Activated T-helper 1 cell treated with anti-CD3 and anti-CD28 coated beads, Interleukin-12 subunit alpha, Interleukin-12 subunit beta, Interleukin-2, Interleukin-4 antibody, amounts not matched to agents 30 ng/mL and 10 ng/mL and 1 ng/mL, durations not matched to agents 14 hours and 24 hours and 36 hours (primary cell): ENCODE measurements at regions of chr10 and their contacts with region 1.

Region 1: DNA sequence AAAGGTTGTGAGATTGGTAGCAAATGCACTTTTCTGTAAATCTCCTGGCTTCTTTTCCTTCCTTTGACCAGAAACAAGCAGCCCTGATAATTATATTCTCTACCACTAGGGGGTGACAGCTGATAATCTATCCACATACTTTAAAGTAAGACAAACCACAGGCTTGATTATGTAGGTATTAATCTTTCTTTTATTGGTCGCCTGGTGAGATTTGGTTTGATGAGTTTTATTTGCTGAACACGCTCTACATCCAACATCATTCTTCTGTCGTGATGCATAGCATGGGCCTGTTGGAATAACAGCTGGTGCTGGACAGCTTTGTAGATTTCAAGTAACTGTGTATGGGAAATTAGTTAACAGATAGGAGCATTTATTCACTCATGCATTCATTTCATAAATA is 63.5 kb downstream of the ZNF365 start:
- DNase-seq: no peak
- H3K4me3 Mint-ChIP-seq: no peak overlapping the region
- H3K27ac Mint-ChIP-seq: no peak overlapping the region
- H3K4me1 Mint-ChIP-seq: peaks cover 12% of the 10 kb centered on the region
- H3K27me3 Mint-ChIP-seq: peaks cover 15% of the 10 kb centered on the region

Region 2: GRCh38 chr10:61896854-61897661 is 540.6 kb before region 1 on chr10:
- intact Hi-C with region 1: loop called (anchors 5 kb)
- DNase-seq: peak; percentile 56
- H3K4me3 Mint-ChIP-seq: peak overlapping the region; percentile 87
- H3K27ac Mint-ChIP-seq: peak overlapping the region; percentile 90
- H3K4me1 Mint-ChIP-seq: peaks cover 38% of the 10 kb centered on the region
- H3K27me3 Mint-ChIP-seq: peaks cover 3% of the 10 kb centered on the region

Region 3: GRCh38 chr10:62082729-62083411 is 354.8 kb before region 1 on chr10:
- intact Hi-C with region 1: no loop called
- DNase-seq: peak; percentile 26
- H3K4me3 Mint-ChIP-seq: peak overlapping the region; percentile 78
- H3K27ac Mint-ChIP-seq: peak overlapping the region; percentile 84
- H3K4me1 Mint-ChIP-seq: peaks cover 72% of the 10 kb centered on the region
- H3K27me3 Mint-ChIP-seq: no peaks in the 10 kb centered on the region

Region 4: GRCh38 chr10:62352356-62352970 is 85.2 kb before region 1 on chr10:
- intact Hi-C with region 1: loop called (anchors 1 kb)
- DNase-seq: no peak
- H3K4me3 Mint-ChIP-seq: no peak overlapping the region
- H3K27ac Mint-ChIP-seq: peak overlapping the region; percentile 7
- H3K4me1 Mint-ChIP-seq: peaks cover 11% of the 10 kb centered on the region
- H3K27me3 Mint-ChIP-seq: peaks cover 3% of the 10 kb centered on the region

Region 5: GRCh38 chr10:62594093-62594520 is 156.4 kb after region 1 on chr10:
- intact Hi-C with region 1: loop called (anchors 1 kb)
- DNase-seq: peak; percentile 27
- H3K4me3 Mint-ChIP-seq: no peak overlapping the region
- H3K27ac Mint-ChIP-seq: no peak overlapping the region
- H3K4me1 Mint-ChIP-seq: peaks cover 19% of the 10 kb centered on the region
- H3K27me3 Mint-ChIP-seq: peaks cover 23% of the 10 kb centered on the region

Region 6: DNA sequence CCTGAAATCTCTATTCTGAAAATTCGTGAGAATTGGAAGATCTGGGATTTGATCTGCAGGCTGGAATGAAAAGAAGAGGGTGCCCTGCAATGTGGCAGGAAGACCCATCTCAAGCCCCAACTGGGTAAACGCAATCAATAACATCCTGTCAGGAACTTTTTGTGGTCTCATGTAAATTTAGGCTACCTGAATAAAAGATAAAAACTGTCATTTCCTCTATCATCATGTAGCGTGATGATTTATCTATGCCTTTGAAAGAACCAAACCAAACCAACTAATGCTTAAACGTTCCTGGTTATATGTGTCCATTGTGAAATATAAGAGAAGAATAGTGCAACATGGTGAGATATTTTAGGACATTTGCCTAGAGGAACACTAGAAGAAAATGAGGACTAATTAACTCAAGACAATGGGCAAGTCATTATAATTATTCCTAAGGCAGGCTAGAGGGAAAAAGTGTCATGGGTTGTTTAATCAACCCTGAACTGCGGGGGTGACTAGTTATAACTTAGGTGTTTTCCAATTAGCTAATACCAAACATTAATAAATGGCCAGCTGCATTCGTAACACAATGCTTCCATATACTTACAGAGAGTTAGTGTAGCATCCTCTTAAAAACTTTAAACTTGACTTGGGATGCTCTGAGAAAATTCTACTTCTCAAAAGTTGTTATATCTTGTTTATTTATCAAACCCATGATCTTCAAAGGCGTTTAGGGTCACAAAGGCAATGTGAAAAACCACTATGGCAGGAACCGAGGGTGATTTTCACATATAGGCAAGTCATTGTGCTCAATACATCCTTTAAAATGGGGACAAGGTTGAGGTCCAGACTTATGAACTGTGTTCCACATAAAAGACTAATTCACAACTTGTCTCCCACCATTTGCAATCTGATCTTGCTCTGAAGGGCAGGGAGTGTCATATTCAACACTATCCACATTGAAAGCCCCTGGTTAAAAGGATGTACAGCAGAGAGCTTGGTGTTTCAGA is 318.3 kb after region 1 on chr10:
- intact Hi-C with region 1: no loop called
- DNase-seq: no peak
- H3K4me3 Mint-ChIP-seq: no peak overlapping the region
- H3K27ac Mint-ChIP-seq: no peak overlapping the region
- H3K4me1 Mint-ChIP-seq: peaks cover 22% of the 10 kb centered on the region
- H3K27me3 Mint-ChIP-seq: peaks cover 2% of the 10 kb centered on the region

Region 7: GRCh38 chr10:63083904-63084689 is 646.4 kb after region 1 on chr10:
- intact Hi-C with region 1: loop called (anchors 1 kb)
- DNase-seq: peak; percentile 14
- H3K4me3 Mint-ChIP-seq: no peak overlapping the region
- H3K27ac Mint-ChIP-seq: no peak overlapping the region
- H3K4me1 Mint-ChIP-seq: peaks cover 12% of the 10 kb centered on the region
- H3K27me3 Mint-ChIP-seq: peaks cover 28% of the 10 kb centered on the region